Activated T-helper 1 cell treated with anti-CD3 and anti-CD28 coated beads, Interleukin-12 subunit alpha, Interleukin-12 subunit beta, Interleukin-2, Interleukin-4 antibody, amounts not matched to agents 30 ng/mL and 10 ng/mL and 1 ng/mL, durations not matched to agents 14 hours and 24 hours and 36 hours (primary cell): ENCODE measurements at regions of chr3 and their contacts with region 1.

Region 1: GRCh38 chr3:101561630-101562328 is at the start of gene TRMT10C:
- DNase-seq: peak; percentile 89
- H3K4me3 Mint-ChIP-seq: peak within 1 kb of the TSS; percentile 99
- H3K27ac Mint-ChIP-seq: peak within 1 kb of the TSS; percentile 98
- H3K4me1 Mint-ChIP-seq: peaks cover 34% of the 10 kb centered on the region
- H3K27me3 Mint-ChIP-seq: peaks cover 4% of the 10 kb centered on the region
- total RNA-seq, gene TRMT10C: 59.9 and 60.5 TPM in 2 replicates

Region 2: DNA sequence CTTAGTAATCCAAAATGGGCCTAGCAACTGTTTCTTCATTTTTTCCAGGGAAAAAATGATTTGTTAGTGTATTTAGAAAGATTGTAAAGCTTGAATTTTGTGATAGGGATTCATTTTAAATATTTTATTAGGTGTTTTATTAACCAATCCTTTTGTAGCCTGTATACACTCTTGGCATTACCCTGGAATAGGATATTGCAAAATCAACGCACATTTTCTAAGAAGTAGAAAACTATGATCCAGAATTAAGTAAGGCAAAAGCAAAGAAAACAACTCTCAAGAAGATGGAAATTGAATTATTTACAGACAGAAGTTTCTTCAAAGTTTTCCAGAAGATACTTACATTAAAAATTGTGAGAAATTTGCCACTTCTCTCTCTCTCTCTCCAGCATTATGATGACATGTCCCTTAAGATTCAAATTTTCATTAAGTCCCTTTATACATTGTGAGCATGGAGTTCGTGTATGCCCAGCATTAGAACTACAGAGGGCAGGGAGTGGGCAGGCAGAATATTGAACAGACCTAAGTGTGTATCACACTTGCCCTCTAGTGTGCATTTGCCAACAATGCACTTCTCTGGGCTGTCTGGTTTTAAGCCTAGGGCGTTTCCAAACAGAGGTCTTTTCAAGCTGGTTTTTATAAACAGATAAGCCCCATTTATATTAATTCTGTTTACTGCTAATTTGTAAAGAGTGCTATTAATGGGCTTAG is 1772.6 kb before region 1 on chr3:
- intact Hi-C with region 1: no loop called
- DNase-seq: no peak
- H3K4me3 Mint-ChIP-seq: no peak overlapping the region
- H3K27ac Mint-ChIP-seq: no peak overlapping the region
- H3K4me1 Mint-ChIP-seq: no peaks in the 10 kb centered on the region
- H3K27me3 Mint-ChIP-seq: peaks cover 23% of the 10 kb centered on the region

Region 3: GRCh38 chr3:100260685-100261484 is 1300.9 kb before region 1 on chr3 and contains the start of gene TBC1D23:
- intact Hi-C with region 1: loop called (anchors 10 kb)
- DNase-seq: peak; percentile 97
- H3K4me3 Mint-ChIP-seq: peak within 1 kb of the TSS; percentile 92
- H3K27ac Mint-ChIP-seq: peak within 1 kb of the TSS; percentile 97
- H3K4me1 Mint-ChIP-seq: peaks cover 38% of the 10 kb centered on the region
- H3K27me3 Mint-ChIP-seq: no peaks in the 10 kb centered on the region
- total RNA-seq, gene TBC1D23: 18.3 and 19.0 TPM in 2 replicates

Region 4: GRCh38 chr3:101512646-101513418 is 48.9 kb before region 1 on chr3 and contains the start of gene SENP7:
- intact Hi-C with region 1: loop called (anchors 1 kb)
- DNase-seq: peak; percentile 72
- H3K4me3 Mint-ChIP-seq: peak within 1 kb of the TSS; percentile 94
- H3K27ac Mint-ChIP-seq: peak within 1 kb of the TSS; percentile 95
- H3K4me1 Mint-ChIP-seq: peaks cover 31% of the 10 kb centered on the region
- H3K27me3 Mint-ChIP-seq: no peaks in the 10 kb centered on the region
- total RNA-seq, gene SENP7: 9.1 and 10.7 TPM in 2 replicates

Region 5: DNA sequence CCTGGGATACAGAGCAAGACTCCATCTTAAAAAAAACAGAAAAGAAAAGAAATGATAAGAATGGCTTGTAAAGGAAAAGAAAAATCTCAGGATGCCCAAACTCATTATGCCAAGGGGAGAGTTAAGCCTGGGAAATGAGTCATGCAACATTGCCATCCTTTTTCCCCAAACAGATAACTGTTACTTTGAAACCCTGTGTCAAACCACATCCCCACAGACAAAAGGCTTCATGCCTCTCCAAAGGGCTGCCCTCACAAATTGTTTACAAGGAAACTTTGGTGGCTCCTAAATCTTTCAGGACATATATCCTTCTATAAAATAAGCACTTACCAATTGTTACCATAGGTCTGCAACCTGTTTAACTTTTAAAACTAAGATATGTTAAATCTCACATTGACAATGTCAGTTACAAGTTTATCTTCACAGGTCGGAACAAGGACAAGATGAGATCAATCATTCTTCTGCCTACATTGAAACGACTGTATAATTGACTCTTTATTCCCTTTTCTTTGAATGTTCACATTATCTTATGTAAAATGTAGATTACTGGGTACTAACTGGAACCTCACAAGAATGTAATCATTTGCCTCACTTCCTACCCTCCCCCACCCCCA is 30.2 kb before region 1 on chr3:
- intact Hi-C with region 1: loop called (anchors 1 kb)
- DNase-seq: no peak
- H3K4me3 Mint-ChIP-seq: peak overlapping the region; percentile 17
- H3K27ac Mint-ChIP-seq: peak overlapping the region; percentile 34
- H3K4me1 Mint-ChIP-seq: peaks cover 35% of the 10 kb centered on the region
- H3K27me3 Mint-ChIP-seq: no peaks in the 10 kb centered on the region

Region 6: DNA sequence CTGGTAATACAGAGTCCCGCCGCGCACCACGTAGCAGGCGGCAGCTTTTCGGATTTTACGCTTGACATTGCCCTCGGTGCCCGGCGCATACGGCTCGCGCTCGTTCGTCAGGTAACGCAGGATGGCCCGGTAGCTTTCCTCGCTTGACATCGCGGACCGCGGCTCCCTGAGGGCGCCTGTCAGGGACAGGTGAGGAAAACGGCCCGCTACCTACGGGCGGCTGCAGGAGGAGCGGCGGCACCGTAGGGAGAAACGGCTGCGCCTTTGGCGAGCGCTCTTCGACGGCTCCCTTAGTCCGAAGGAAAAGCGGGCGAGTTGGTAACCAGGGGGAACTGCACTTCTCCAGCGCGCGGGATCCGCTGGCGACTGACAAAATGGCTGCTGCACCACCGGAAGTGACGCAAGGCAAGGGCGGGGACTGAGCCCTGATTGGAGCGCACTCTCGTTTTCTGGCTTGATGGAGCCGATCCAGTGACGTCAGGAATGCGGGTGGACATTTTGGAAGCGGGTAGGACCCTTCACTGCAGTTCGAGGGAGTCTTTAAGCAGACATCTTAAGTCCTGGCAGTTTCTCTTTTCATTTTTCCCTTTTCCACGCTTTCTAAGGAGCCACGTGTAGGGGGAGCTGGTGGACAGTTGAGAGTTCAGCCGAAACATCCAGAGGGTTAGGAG is 115.1 kb after region 1 on chr3 and contains the start of gene ZBTB11:
- intact Hi-C with region 1: loop called (anchors 1 kb)
- DNase-seq: peak; percentile 99
- H3K4me3 Mint-ChIP-seq: peak within 1 kb of the TSS; percentile 96
- H3K27ac Mint-ChIP-seq: peak within 1 kb of the TSS; percentile 97
- H3K4me1 Mint-ChIP-seq: peaks cover 56% of the 10 kb centered on the region
- H3K27me3 Mint-ChIP-seq: no peaks in the 10 kb centered on the region
- total RNA-seq, gene ZBTB11: 29.0 and 31.9 TPM in 2 replicates

Region 7: DNA sequence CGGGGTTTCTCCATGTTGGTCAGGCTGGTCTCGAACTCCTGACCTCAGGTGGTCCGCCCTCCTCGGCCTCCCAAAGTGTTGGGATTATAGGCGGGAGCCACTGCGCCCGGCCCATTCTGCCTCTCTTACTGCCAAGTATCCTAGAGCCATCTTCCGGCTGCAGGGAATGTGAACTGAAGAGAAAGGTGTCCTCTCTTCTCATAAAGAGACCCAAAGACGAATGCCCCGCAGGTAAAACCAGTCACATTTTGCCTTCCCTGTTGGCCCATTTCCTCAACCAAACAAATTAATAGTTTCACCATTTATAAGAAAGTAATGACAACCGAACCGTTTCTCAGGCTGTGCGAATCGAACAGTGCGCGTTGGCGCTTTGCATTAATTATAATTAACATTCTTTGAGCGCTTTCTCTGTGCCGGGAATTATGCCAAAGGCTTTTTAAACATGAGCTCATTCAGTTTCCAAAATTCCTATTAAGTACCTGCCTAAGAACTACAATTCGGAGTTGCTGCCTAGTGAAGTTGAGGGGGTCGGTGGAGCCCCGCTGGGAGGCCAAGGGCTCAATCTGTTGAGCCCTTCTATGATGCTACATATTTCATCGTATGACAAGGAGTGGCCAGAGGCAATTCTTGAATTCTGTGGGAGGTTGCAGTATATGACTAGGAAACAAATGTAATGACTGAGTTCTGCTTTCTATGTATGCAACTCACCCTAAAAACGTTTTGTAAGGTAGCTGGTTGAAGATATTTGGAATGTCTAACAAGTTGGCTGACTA is 125.6 kb after region 1 on chr3:
- intact Hi-C with region 1: no loop called
- DNase-seq: no peak
- H3K4me3 Mint-ChIP-seq: peak overlapping the region; percentile 99
- H3K27ac Mint-ChIP-seq: peak overlapping the region; percentile 97
- H3K4me1 Mint-ChIP-seq: peaks cover 22% of the 10 kb centered on the region
- H3K27me3 Mint-ChIP-seq: no peaks in the 10 kb centered on the region